PC-9 (cell line): ENCODE measurements at regions of chr7 and their contacts with region 1.

Region 1: DNA sequence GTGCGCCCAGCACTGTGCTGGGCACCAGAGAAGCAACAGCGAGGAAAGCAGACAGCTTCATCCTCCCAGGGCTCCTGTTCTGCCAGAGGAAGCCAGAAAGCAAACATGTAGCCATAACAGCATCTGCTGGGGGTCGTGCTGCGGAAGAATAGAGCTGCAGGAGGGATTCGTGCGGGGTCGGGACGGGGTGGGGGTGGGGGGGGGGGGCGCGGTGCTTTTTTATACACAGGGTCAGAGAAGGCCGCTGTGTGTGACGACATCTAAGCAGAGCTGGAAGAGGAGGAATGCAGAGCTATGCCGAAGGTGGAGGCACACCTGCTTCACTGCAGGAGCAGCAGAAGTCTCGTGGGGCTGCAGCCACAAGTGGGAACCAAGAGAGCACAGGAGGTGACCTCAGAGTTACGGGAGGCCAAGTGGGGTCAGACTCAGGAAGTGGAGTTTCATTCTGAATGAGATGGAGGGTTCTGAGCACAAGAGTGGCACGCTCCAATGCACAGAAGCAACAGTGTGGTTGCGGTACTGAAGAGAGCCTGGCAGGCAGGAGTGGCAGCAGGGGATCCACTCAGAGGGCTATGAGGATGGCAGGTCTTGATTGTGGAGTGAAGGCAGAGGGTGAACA is 11.1 kb downstream of the PKD1L1 start:
- DNase-seq: no peak
- H3K4me3 ChIP-seq: no peak overlapping the region
- H3K27ac ChIP-seq: no peak overlapping the region
- H3K4me1 ChIP-seq: peaks cover 19% of the 10 kb centered on the region
- H3K27me3 ChIP-seq: no peaks in the 10 kb centered on the region
- CTCF ChIP-seq: no peak

Region 2: GRCh38 chr7:47786557-47787248 is 150.5 kb before region 1 on chr7:
- CTCF ChIA-PET with region 1: no interaction called
- POLR2A ChIA-PET with region 1: no interaction called
- intact Hi-C with region 1: no loop called
- DNase-seq: peak; percentile 99 to 100
- H3K4me3 ChIP-seq: peak overlapping the region; percentile 20
- H3K27ac ChIP-seq: peak overlapping the region; percentile 93
- H3K4me1 ChIP-seq: peaks cover 77% of the 10 kb centered on the region
- H3K27me3 ChIP-seq: no peaks in the 10 kb centered on the region
- CTCF ChIP-seq: no peak

Region 3: DNA sequence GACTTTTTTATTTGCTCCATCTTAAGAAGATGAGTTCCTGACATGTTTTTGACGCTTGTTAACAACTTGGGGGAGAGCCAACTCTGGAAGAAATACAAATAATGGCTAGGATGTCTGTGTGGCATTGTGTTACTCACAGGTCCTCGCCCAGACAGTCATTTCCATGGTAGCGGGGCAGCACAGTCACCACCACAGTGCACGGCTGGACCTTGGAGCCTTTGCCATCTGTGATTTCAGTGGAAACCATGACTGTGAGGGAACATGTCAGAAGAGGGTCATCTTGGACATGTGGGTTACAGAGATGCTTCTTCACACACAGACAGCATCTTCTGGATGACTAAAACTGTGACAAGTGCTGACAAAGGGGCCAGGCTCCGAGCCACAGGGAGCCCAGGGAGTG is 63.4 kb before region 1 on chr7:
- CTCF ChIA-PET with region 1: interaction called, 10 read pairs
- POLR2A ChIA-PET with region 1: no interaction called
- intact Hi-C with region 1: no loop called
- DNase-seq: peak in 1 of 2 experiments; percentile 24
- H3K4me3 ChIP-seq: no peak overlapping the region
- H3K27ac ChIP-seq: no peak overlapping the region
- H3K4me1 ChIP-seq: no peaks in the 10 kb centered on the region
- H3K27me3 ChIP-seq: no peaks in the 10 kb centered on the region
- CTCF ChIP-seq: no peak